MCF 10A (cell line): ENCODE measurements at regions of chr1 and their contacts with region 1.

Region 1: DNA sequence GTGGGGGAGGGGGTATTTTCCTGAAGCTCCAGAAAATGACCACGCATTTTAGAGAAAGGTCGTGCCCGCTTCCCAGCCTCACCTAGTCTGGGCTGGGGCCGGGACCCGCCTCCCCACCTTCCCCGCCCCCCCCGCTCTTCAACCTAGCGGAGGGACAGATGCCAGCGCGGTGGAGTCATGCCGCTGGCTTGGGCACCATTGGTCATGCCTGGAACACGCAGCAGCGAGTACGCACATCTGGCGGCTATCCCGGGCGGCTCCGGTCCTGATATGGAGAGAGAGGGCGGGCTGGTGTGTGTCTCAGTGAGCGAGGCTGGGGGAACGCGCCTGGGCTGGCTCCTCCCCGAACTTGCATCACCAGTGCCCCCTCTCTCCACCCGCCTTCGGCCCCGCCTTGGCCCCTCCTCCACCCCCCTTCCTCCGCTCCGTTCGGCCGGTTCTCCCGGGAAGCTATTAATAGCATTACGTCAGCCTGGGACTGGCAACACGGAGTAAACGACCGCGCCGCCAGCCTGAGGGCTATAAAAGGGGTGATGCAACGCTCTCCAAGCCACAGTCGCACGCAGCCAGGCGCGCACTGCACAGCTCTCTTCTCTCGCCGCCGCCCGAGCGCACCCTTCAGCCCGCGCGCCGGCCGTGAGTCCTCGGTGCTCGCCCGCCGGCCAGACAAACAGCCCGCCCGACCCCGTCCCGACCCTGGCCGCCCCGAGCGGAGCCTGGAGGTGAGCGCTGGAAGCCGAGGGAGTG is at the start of gene ATF3:
- DNase-seq: peak; percentile 100
- H3K4me3 Mint-ChIP-seq: peak within 1 kb of the TSS; percentile 72
- H3K27ac Mint-ChIP-seq: peak within 1 kb of the TSS; percentile 98
- H3K4me1 Mint-ChIP-seq: peaks cover 37% of the 10 kb centered on the region
- H3K27me3 Mint-ChIP-seq: peaks cover 75% of the 10 kb centered on the region
- CTCF ChIP-seq: no peak
- total RNA-seq, gene ATF3: 85.3 and 114 TPM in 2 replicates

Region 2: GRCh38 chr1:212488397-212489283 is 119.7 kb before region 1 on chr1:
- CTCF ChIA-PET with region 1: no interaction called
- POLR2A ChIA-PET with region 1: interaction called, 23 read pairs
- intact Hi-C with region 1: loop called (anchors 1 kb)
- DNase-seq: peak; percentile 93
- H3K4me3 Mint-ChIP-seq: no peak overlapping the region
- H3K27ac Mint-ChIP-seq: peak overlapping the region; percentile 97
- H3K4me1 Mint-ChIP-seq: peaks cover 41% of the 10 kb centered on the region
- H3K27me3 Mint-ChIP-seq: no peaks in the 10 kb centered on the region
- CTCF ChIP-seq: no peak

Region 3: DNA sequence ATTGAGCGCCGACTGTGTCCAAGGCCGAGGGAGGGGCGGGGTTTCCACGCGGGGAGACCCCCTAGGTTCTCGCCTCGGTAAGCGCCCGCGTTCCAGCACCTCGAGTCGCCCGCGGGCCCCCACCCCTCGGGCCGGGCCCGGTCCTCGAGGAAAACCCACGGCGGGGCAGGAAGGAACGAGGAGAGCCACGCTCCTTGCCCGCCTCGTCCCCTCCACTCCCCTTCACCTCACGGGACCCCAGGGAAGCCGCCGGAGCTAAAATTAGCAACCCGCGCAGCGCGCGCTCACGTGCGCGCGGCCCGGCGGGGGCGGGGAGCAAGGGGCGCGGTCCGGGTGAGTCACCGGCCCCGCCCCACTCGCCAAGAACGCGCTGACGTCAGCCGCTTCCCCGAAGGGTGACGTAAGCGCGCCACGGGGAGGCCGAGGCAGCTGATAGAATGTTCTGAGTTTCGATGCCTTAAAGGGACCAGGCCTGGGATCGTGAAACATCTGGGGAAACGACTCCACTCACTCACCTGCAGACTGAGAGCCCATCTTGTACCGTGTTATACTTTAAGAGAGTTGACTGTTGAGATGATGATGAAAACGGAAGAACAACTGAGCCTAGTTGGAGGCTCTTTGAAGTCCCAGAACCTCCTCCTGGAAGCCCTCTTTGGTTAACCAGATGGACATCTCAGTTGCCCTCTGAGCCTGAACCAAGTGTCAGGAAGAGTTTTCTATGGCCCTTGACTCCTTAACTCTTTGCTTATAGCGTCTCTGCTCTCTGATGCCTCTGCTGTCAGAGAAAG is 49.5 kb before region 1 on chr1:
- CTCF ChIA-PET with region 1: interaction called, 4 read pairs
- POLR2A ChIA-PET with region 1: interaction called, 65 read pairs
- intact Hi-C with region 1: loop called (anchors 2 kb)
- DNase-seq: peak; percentile 98
- H3K4me3 Mint-ChIP-seq: peak overlapping the region; percentile 70
- H3K27ac Mint-ChIP-seq: peak overlapping the region; percentile 99
- H3K4me1 Mint-ChIP-seq: peaks cover 16% of the 10 kb centered on the region
- H3K27me3 Mint-ChIP-seq: no peaks in the 10 kb centered on the region
- CTCF ChIP-seq: no peak

Region 4: DNA sequence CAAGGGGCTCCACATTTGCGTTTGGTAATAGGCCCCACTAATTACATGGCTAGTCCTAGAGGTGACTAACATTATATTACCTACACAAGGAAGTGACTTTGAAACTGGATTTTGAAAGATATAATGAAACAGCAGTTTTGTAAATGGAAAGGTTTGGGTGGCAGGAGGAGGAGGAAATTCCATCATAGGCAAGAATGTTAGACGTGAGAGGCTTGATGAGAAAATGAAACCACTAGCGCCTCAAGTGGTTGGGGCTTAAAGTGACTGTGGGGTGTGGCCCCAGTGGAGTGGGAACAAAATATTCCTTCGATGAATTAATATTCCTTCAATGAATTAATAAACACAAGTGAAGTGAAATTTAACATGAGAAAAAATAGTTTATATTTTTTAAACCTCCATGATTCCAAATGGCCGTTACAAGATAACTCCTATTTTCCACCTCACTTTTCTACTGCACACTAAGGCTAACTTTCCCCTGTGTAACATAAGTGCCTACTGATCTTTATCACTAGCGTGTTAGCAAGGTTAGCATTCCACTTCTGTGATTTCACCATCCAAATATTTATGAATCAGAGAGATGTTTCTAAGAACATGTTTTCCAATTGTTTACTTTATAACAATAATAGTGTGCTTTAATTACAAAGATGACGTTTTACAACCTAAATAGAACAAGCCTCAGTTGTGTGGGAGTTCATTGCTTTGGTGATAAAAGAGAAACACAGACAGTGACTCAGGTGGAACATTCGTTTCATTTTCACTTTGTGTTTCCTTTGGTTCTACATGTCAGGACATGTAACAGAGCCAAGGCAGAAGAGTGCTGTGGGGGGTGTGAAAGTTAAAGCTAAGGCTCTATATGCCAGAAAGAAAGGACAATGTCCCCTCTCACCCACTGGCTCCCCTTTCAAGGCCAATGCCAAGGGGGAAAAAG is 12.3 kb before region 1 on chr1:
- CTCF ChIA-PET with region 1: interaction called, 40 read pairs
- POLR2A ChIA-PET with region 1: interaction called, 216 read pairs
- intact Hi-C with region 1: loop called (anchors 1 kb)
- DNase-seq: peak; percentile 97
- H3K4me3 Mint-ChIP-seq: peak overlapping the region; percentile 69
- H3K27ac Mint-ChIP-seq: peak overlapping the region; percentile 100
- H3K4me1 Mint-ChIP-seq: peaks cover 27% of the 10 kb centered on the region
- H3K27me3 Mint-ChIP-seq: peaks cover 30% of the 10 kb centered on the region
- CTCF ChIP-seq: peak; percentile 97

Region 5: DNA sequence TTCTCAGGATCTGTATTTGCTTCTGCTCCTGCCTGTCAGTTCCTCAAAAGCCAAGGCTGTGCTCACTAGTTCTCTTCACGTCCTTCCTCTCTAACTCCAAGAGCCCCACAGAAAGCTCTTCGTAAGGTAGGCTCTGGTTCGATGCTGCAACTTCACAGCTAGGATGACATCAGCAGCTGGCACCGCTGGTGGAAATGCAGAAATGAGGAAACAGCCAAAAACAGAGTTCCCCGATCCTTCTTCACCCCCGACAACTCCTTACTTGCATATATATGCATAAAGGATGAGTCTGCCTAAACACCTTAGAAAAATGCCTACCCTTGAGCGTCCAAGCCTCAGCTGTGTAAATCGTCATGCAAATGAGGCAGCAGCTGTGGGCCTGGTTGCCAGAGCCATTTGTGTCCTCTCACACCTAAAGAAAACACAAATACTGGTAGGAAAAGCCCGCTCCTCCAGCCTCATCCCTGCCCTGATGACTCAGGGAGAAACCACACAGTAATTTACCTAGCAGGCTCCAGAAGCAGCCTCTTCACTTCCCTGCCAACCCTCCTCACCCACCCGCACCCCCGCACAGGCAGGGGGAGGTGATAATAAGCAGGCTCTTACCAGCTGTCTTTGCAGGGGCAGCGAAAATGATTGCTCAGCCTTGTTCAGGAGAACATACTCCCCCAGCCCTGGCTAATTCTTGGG is 63.1 kb after region 1 on chr1:
- CTCF ChIA-PET with region 1: interaction called, 3 read pairs
- POLR2A ChIA-PET with region 1: interaction called, 6 read pairs
- intact Hi-C with region 1: loop called (anchors 2 kb)
- DNase-seq: peak; percentile 95
- H3K4me3 Mint-ChIP-seq: peak overlapping the region; percentile 50
- H3K27ac Mint-ChIP-seq: peak overlapping the region; percentile 29
- H3K4me1 Mint-ChIP-seq: peaks cover 31% of the 10 kb centered on the region
- H3K27me3 Mint-ChIP-seq: no peaks in the 10 kb centered on the region
- CTCF ChIP-seq: no peak

Region 6: DNA sequence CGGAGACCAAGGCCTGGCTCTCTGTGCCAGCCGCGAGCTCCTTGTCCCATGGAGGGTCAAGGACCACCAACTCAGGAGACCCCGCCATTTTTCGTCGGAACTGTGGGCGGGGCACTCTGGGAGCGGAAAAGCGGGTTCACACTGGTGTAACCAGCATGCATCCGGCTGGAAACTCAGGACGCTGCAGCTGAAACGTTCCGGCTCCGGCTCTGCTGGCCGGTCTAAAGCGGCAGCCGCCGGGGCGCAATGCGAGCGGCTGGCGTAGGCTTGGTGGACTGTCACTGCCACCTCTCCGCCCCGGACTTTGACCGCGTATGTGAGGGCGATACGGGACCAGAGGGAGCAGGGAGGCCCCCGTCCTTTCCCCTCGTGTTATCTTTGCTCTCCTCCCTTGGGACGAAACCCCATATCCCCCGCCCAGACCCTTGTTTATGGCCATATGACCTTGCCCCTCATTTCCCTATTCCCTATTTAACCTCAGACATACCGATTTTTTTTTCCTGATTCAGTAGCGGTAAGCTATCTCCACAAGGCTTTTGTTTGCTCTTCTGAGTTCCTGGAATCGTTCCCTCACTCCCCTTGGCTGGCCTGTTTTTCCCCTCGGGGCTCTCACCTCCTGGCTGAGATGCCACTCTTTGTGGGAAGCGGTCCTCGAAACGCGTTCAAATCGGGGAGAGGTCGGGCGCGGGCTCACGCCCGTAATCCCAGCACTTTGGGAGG is 183.5 kb after region 1 on chr1 and contains the starts of genes NSL1 and TATDN3:
- CTCF ChIA-PET with region 1: interaction called, 3 read pairs
- POLR2A ChIA-PET with region 1: interaction called, 40 read pairs
- intact Hi-C with region 1: no loop called
- DNase-seq: peak; percentile 98
- H3K4me3 Mint-ChIP-seq: peak within 1 kb of the TSS; percentile 83
- H3K27ac Mint-ChIP-seq: peak within 1 kb of the TSS; percentile 90
- H3K4me1 Mint-ChIP-seq: peaks cover 19% of the 10 kb centered on the region
- H3K27me3 Mint-ChIP-seq: no peaks in the 10 kb centered on the region
- CTCF ChIP-seq: no peak
- total RNA-seq, gene NSL1: 39.7 and 42.2 TPM in 2 replicates
- total RNA-seq, gene TATDN3: 31.5 and 35.7 TPM in 2 replicates

Region 7: DNA sequence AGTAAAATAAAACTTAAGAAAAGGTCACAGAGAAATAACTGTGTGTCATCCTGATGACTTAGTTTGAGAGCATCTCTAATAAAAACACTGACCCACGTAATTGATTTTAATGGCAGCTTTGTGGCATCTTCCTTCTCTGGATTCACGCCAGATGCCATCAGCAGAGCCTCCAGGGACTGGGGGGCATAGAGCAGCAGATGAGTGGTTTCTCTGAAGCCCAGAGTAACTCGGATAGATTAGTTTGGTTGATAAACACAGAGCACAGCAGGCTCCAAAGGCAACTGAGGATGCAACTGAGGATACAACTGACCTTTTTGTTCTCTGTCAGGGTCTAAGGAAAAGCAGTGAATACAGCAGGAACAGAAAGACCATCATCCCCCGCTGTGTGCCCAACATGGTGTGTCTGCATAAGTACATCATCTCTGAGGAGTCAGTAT is 623.4 kb after region 1 on chr1:
- CTCF ChIA-PET with region 1: no interaction called
- POLR2A ChIA-PET with region 1: no interaction called
- intact Hi-C with region 1: no loop called
- DNase-seq: no peak
- H3K4me3 Mint-ChIP-seq: no peak overlapping the region
- H3K27ac Mint-ChIP-seq: no peak overlapping the region
- H3K4me1 Mint-ChIP-seq: no peaks in the 10 kb centered on the region
- H3K27me3 Mint-ChIP-seq: no peaks in the 10 kb centered on the region
- CTCF ChIP-seq: no peak